ENCODE measurements at regions of chr22 and their contacts with region 1.

Region 1: GRCh38 chr22:23696326-23696851 is 5.6 kb downstream of the RGL4 start:
- DNase-seq: peak; percentile 71 to 92 (median 76)
- ATAC-seq: peak; percentile 97
- H3K4me3 ChIP-seq: peak overlapping the region; percentile 64
- H3K4me3 Mint-ChIP-seq: peak overlapping the region; percentile 89
- H3K27ac ChIP-seq: peak overlapping the region; percentile 91 to 97
- H3K27ac Mint-ChIP-seq: peak overlapping the region; percentile 97
- H3K4me1 ChIP-seq: peaks cover 53% of the 10 kb centered on the region
- H3K4me1 Mint-ChIP-seq: peaks cover 46% of the 10 kb centered on the region
- H3K27me3 ChIP-seq: no peaks in the 10 kb centered on the region
- H3K27me3 Mint-ChIP-seq: no peaks in the 10 kb centered on the region
- CTCF ChIP-seq: no peak

Region 2: DNA sequence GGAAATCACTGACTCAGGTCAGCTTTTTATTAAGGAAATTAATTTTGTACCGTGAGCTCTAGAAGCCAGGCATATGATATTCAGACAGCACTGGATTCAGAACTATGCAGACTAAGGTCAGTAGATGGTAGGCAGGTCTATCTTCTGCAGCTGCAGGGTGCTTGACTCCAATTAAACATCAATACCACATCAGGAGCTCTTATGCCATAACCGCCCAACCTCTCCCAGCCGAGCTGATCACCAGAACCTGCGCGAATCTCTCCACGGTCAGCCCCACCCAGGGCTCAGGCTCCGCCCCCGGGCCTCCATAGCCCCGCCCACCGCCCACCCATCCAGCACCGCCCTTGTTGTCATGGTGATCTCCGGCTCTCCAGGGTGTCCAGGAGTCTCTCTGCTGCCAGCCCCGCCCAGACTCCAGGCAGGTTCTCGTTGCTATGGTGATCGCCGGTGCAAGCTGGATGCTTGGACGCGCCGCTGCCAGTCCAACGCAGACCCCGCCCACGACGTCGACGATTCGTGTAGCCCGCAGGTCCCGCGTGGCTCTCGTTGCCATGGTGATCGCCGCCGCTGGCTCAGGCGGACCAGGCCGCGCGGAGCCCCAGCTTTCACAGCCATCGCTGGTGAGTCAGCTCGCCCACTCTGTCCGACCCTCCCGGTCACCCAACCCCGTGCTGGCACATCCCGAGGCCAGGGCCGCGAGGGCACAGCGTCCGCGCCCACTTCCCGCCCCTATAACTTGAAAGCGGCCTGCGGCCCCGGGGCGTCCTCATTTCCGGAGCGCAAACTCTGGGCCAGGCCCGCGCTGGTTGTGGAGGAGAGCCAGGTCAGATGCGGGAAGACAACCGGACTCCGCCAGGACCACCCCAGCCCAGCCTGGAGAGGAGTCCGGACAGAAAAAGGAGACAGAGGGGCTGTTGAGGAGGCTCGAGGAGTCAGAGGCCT is 551.2 kb before region 1 on chr22 and contains the start of gene RAB36:
- CTCF ChIA-PET with region 1: no interaction called
- POLR2A ChIA-PET with region 1: no interaction called
- intact Hi-C with region 1: loop called in 1 of 2 experiments (anchors 10 kb)
- DNase-seq: peak; percentile 70 to 99 (median 90)
- ATAC-seq: peak; percentile 52
- H3K4me3 ChIP-seq: peak within 1 kb of the TSS; percentile 50
- H3K4me3 Mint-ChIP-seq: peak within 1 kb of the TSS; percentile 89
- H3K27ac ChIP-seq: peak within 1 kb of the TSS; percentile 54 to 78
- H3K27ac Mint-ChIP-seq: peak within 1 kb of the TSS; percentile 94
- H3K4me1 ChIP-seq: peaks cover 57% of the 10 kb centered on the region
- H3K4me1 Mint-ChIP-seq: peaks cover 50% of the 10 kb centered on the region
- H3K27me3 ChIP-seq: no peaks in the 10 kb centered on the region
- H3K27me3 Mint-ChIP-seq: no peaks in the 10 kb centered on the region
- CTCF ChIP-seq: no peak
- total RNA-seq, gene RAB36: 0.77 to 0.87 TPM

Region 3: DNA sequence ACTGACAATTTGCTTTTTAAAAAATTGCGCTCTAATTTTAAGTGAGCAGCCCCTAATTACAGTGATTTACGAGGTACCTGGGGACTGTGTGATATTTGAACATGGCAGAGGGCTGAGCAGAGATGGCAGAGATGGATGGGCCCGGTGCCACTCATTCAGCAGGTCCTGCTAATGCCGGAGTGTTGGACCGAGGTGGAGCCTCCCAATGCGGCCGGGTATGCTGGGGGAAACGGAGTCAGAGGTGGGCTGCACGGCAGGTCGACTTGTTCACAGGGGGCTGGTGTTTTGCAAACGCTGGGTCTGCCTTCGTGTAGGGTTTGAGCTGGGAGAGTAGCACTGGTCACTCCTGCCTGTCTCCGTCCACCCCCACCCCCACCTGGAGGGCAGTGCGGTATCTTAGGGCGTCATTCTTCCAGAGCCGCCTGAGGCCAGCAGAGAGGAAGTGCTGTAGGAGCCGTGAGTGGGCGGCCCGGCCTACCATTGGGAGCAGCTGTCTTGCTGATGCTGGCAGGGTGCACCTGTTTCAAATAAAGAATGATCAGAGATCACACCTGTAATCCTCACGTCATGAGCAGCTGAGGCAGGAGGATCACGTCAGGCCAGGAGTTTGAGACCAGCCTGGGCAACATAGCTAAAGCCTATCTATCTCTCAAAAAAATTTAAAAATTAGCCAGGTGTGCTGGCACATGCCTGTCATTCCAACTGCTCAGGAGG is 238.9 kb before region 1 on chr22:
- CTCF ChIA-PET with region 1: no interaction called
- POLR2A ChIA-PET with region 1: no interaction called
- intact Hi-C with region 1: no loop called
- DNase-seq: no peak
- ATAC-seq: no peak
- H3K4me3 ChIP-seq: no peak overlapping the region
- H3K4me3 Mint-ChIP-seq: no peak overlapping the region
- H3K27ac ChIP-seq: no peak overlapping the region
- H3K27ac Mint-ChIP-seq: no peak overlapping the region
- H3K4me1 ChIP-seq: peaks cover 6% of the 10 kb centered on the region
- H3K4me1 Mint-ChIP-seq: peaks cover 12% of the 10 kb centered on the region
- H3K27me3 ChIP-seq: peaks cover 21 to 32% of the 10 kb centered on the region in 2 experiments
- H3K27me3 Mint-ChIP-seq: peaks cover 37% of the 10 kb centered on the region
- CTCF ChIP-seq: no peak

Region 4: DNA sequence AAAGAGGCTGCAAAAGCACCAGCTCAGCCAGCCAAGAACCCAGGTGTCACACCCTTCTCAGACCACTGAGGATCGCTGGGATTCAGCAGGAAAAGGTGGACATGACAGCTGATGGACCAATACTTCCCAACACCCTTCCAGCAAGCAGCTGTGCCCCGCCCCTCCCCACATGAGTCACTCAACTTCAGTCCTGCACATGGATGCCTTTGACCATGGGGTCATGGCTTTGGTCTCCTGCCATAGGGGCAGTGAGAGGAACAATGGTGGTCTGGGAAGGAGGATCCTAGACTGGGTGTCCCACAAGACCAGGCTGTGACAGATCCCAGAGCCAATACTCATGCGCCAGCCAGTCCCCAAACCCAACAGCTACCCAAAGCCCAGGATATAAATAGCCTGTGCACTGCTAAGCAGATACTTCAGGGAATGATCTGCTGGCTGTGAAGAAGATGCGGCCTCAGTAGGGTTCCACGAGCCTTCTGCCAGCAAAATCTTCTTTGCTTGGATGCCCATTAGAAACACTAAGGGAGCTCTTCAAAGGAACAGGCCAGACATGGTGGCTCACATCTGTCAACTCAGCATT is 11.1 kb before region 1 on chr22:
- CTCF ChIA-PET with region 1: no interaction called
- POLR2A ChIA-PET with region 1: interaction called, 13 read pairs
- intact Hi-C with region 1: no loop called
- DNase-seq: no peak
- ATAC-seq: no peak
- H3K4me3 ChIP-seq: no peak overlapping the region
- H3K4me3 Mint-ChIP-seq: no peak overlapping the region
- H3K27ac ChIP-seq: no peak overlapping the region
- H3K27ac Mint-ChIP-seq: no peak overlapping the region
- H3K4me1 ChIP-seq: no peaks in the 10 kb centered on the region
- H3K4me1 Mint-ChIP-seq: no peaks in the 10 kb centered on the region
- H3K27me3 ChIP-seq: no peaks in the 10 kb centered on the region
- H3K27me3 Mint-ChIP-seq: no peaks in the 10 kb centered on the region
- CTCF ChIP-seq: no peak

Region 5: GRCh38 chr22:23767673-23768548 is 71.5 kb after region 1 on chr22 and contains the start of gene CHCHD10:
- CTCF ChIA-PET with region 1: no interaction called
- POLR2A ChIA-PET with region 1: interaction called, 3 read pairs
- intact Hi-C with region 1: loop called in 1 of 2 experiments (anchors 5 kb)
- DNase-seq: peak; percentile 55 to 84 (median 70)
- ATAC-seq: peak; percentile 72
- H3K4me3 ChIP-seq: peak within 1 kb of the TSS; percentile 85
- H3K4me3 Mint-ChIP-seq: peak within 1 kb of the TSS; percentile 85
- H3K27ac ChIP-seq: peak within 1 kb of the TSS in 1 of 2 donors; percentile 23
- H3K27ac Mint-ChIP-seq: peak within 1 kb of the TSS; percentile 51
- H3K4me1 ChIP-seq: peaks cover 66% of the 10 kb centered on the region
- H3K4me1 Mint-ChIP-seq: peaks cover 29% of the 10 kb centered on the region
- H3K27me3 ChIP-seq: no peaks in the 10 kb centered on the region
- H3K27me3 Mint-ChIP-seq: no peaks in the 10 kb centered on the region
- CTCF ChIP-seq: peak; percentile 62
- total RNA-seq, gene CHCHD10: 34.4 to 43.0 TPM

Measured in CD4-positive, alpha-beta T cell (primary cell).